ENCODE measurements at regions of chr11 and their contacts with region 1.

Region 1: GRCh38 chr11:17978553-17979287 is 34.1 kb downstream of the SERGEF start:
- DNase-seq: peak; percentile 22 to 52 (median 49)
- H3K4me3 ChIP-seq: no peak overlapping the region
- H3K27ac ChIP-seq: no peak overlapping the region
- H3K4me1 ChIP-seq: no peaks in the 10 kb centered on the region
- H3K27me3 ChIP-seq: no peaks in the 10 kb centered on the region

Region 2: DNA sequence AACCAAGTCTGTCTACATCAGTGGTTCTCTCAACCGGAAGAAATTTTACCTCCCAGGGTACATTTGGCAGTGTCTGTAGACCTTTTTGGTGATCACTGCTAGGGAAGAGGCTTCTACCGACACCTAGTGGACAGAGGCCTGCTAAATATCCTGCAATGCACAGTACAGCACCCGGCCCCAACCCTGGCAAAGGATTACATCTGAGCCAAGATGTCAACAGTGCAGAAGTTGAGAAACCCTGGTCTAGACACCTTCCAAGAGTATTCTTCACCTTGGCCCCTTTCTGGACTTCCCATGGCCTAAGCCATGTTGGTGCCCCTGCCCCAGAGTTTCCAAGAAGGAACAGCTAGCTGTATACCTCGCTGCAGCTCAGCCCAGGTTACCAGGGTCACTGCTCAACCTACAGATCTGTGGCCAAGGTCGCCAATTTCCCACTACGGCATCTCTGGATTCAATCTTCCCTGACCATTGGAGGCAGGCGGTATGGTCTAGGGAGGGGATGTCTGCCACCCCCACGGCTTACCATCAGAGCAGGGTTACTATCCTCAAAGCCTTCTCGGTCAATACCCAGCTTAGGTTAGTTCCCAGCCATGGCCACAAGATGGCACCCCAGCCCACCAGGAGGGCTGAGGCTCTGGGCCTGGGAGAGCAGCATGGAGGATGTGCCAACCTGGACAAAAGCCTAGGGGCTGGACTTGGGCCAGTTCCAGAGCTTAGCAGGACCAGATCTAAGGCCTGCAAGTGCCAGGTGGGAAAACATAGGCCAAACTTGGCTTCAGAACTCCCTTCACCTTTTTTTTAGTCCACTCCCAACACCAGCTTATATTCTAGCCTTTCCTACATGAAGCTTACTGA is 247.9 kb before region 1 on chr11:
- CTCF ChIA-PET with region 1: interaction called, 130 read pairs
- POLR2A ChIA-PET with region 1: interaction called, 11 read pairs
- DNase-seq: peak; percentile 43 to 72 (median 63)
- H3K4me3 ChIP-seq: no peak overlapping the region
- H3K27ac ChIP-seq: no peak overlapping the region
- H3K4me1 ChIP-seq: peaks cover 0 to 17% (median 8%) of the 10 kb centered on the region in 4 experiments
- H3K27me3 ChIP-seq: peaks cover 6 to 73% (median 13%) of the 10 kb centered on the region in 5 experiments

Region 3: DNA sequence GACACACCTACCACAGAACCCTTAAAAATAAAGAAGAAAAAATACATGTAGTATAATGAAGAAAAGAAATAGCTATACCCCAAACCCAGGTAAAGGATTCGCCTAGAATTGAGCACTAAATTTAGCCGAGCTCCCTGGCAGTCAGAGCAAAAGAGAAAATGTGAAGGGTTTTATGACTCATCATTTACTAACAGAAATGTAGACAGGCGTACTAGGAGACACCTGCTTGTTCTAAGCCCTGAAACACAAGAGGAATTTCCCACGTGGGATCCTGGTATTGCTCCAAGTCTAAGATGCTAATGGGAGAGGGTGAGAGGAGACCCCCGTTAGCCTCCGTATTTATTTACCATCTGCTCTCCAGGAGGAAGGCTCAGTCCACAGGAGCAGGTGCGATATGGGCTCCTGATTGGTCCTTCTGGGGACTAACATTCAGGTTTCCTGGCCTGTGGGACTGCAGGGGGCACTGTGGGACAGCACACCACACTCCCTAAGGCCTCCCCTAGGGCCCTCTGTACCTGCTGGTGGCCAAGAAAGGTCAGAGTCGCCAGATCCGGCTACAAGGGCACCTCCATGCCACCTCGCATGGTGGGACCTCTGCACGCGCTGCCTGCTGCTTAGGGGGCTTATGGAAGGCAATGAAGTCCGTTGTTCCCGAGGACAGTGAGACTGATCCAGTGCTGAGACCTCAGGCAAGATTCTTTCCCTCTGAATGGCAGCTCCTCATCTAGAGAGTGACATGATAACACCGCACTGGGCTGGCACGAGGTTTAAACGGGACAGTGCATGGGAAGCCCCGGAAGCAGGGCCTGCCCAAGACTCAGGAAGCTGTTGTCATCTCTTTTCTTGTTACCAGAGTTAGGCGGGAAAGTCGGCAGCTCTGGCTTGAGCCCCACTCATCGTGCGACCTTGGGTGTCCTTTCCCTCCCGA is 218.4 kb before region 1 on chr11:
- CTCF ChIA-PET with region 1: interaction called, 38 read pairs
- POLR2A ChIA-PET with region 1: no interaction called
- DNase-seq: peak; percentile 26 to 65 (median 60)
- H3K4me3 ChIP-seq: no peak overlapping the region
- H3K27ac ChIP-seq: no peak overlapping the region
- H3K4me1 ChIP-seq: no peaks in the 10 kb centered on the region
- H3K27me3 ChIP-seq: peaks cover 0 to 10% (median 1%) of the 10 kb centered on the region in 5 experiments

Region 4: GRCh38 chr11:17991783-17992433 is 13.2 kb after region 1 on chr11:
- CTCF ChIA-PET with region 1: interaction called, 47 read pairs
- POLR2A ChIA-PET with region 1: no interaction called
- DNase-seq: peak; percentile 55 to 76 (median 70)
- H3K4me3 ChIP-seq: no peak overlapping the region
- H3K27ac ChIP-seq: no peak overlapping the region
- H3K4me1 ChIP-seq: no peaks in the 10 kb centered on the region
- H3K27me3 ChIP-seq: no peaks in the 10 kb centered on the region

Measured in common myeloid progenitor, CD34-positive (primary cell).